ENCODE measurements at regions of chr19 and their contacts with region 1.

Region 1: DNA sequence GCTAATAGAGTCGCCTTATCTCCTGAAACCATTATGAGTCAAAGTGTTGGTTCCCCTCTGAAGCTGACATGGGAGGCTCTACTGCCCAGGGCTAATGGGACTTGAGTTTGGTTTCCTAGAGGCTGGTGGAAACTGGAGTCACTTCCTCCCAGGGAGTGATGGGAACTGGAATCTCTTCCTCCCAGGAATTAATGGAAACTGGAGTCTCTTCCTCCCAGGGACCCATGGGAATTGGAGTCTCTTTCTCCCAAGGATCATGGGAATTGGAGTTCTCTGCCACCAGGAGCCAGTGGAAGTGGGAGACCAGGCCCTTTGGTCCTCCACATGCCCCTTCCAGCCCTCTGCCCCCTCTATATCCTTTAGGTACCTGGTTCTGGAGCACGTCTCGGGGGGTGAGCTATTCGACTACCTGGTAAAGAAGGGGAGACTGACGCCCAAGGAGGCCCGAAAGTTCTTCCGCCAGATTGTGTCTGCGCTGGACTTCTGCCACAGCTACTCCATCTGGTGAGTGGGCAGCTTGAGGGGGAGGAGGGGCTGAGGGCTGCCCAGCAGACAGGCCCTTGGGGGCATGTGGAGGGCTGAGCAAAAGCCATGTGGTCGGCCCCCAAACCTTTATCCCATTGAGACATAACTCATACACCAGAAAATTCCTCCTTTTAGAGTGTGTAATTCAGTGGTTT is 5.5 kb downstream of the BRSK1 start:
- DNase-seq: no peak
- H3K4me3 ChIP-seq: no peak overlapping the region
- CTCF ChIP-seq: no peak

Region 2: GRCh38 chr19:55014717-55015116 is 274.5 kb before region 1 on chr19:
- CTCF ChIA-PET with region 1: no interaction called
- POLR2A ChIA-PET with region 1: no interaction called
- DNase-seq: no peak
- H3K4me3 ChIP-seq: no peak overlapping the region
- CTCF ChIP-seq: no peak

Region 3: DNA sequence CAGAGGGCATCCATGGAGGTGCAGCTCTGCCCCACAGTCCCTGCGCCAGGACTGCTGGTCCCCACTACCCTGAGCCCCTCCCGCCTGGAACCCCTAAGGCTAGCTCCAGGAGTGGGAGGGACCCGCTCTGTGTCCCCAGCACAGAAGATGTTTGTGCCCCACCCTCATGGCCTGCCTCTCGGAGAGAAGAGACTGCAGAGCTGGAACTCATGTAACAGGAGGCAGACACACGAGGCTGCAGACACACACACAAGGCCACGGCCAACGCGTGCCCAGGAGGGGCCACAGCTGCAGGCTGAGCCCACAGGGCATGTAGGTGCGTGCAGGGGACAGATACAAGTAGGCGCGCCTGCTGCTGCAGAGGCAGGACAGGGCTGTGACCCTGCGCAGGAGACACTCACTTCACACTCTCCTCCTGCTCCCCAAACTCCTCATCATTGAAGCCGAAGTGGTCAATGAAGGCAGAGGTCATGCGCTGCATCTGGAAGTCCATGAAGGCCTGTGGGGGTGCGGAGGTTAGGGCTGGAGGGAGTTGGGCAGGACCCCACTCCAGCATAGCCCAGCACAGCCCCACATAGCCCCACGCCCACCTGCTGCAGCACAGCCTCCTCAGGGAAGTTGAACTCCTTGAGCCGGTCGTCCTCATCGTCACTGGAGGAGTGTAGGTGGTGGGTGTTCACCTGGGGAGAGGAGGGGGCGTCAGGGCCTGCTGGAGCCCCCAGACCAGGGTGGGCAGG is 50.1 kb before region 1 on chr19:
- CTCF ChIA-PET with region 1: no interaction called
- POLR2A ChIA-PET with region 1: no interaction called
- DNase-seq: no peak
- H3K4me3 ChIP-seq: no peak overlapping the region
- CTCF ChIP-seq: no peak

Region 4: GRCh38 chr19:55319785-55320184 is 30.5 kb after region 1 on chr19:
- CTCF ChIA-PET with region 1: interaction called, 11 read pairs
- POLR2A ChIA-PET with region 1: no interaction called
- DNase-seq: no peak
- H3K4me3 ChIP-seq: peak overlapping the region; percentile 33
- CTCF ChIP-seq: no peak

Region 5: DNA sequence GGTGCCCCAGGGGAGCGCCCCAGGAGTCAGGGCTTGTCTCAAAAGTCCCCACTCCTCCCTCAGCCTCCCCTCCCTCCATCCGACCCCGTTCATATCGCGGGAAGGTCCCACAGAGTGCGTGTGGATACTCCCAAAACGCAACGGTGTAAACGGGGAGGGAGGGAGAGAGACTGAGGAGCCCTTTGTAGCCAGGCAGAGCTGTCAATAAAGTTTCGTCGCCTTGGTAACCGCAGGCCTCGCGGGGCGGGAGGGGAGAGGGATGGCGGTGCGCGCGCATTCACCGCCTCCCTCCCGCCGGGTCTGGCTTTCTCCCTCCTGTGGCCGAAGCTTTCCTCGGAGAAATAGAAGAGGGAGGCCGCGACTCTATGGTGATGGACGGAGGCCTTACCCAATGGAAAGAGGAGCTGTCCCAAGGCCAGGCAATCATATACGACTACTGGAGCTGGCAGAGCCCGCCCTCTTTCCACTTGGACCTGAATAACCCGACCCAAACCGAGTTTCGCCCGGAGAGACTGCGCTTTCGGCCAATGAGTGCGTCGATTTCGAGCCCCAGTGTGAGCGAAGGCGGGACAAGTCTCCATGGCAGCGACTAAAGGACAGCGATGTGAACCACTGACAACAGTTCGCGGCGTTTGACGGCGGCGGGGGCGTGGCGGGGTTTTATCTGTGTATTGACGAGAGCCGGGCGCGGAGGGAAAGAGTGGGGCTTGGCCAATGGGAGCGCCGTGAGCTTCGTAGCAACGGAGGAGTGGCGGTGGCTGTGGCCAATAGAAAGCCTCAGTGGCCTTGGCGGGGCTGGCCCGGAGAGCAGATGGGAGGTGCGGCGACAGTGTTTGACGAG is 50.0 kb after region 1 on chr19 and contains the start of gene KMT5C:
- CTCF ChIA-PET with region 1: interaction called, 13 read pairs
- POLR2A ChIA-PET with region 1: no interaction called
- DNase-seq: peak; percentile 100
- H3K4me3 ChIP-seq: peak within 1 kb of the TSS; percentile 74
- CTCF ChIP-seq: peak; percentile 47

Region 6: GRCh38 chr19:55369671-55370304 is 80.5 kb after region 1 on chr19:
- CTCF ChIA-PET with region 1: no interaction called
- POLR2A ChIA-PET with region 1: no interaction called
- DNase-seq: no peak
- H3K4me3 ChIP-seq: peak overlapping the region; percentile 74
- CTCF ChIP-seq: no peak

Region 7: GRCh38 chr19:55385740-55386529 is 96.7 kb after region 1 on chr19 and contains the start of gene RPL28:
- CTCF ChIA-PET with region 1: interaction called, 35 read pairs
- POLR2A ChIA-PET with region 1: no interaction called
- DNase-seq: peak; percentile 74
- H3K4me3 ChIP-seq: peak within 1 kb of the TSS; percentile 97
- CTCF ChIP-seq: no peak

Region 8: GRCh38 chr19:55418185-55418584 is 128.9 kb after region 1 on chr19:
- CTCF ChIA-PET with region 1: interaction called, 23 read pairs
- POLR2A ChIA-PET with region 1: no interaction called
- DNase-seq: peak; percentile 63
- H3K4me3 ChIP-seq: no peak overlapping the region
- CTCF ChIP-seq: peak; percentile 68

Region 9: GRCh38 chr19:55452749-55453346 is 163.6 kb after region 1 on chr19:
- CTCF ChIA-PET with region 1: interaction called, 12 read pairs
- POLR2A ChIA-PET with region 1: no interaction called
- DNase-seq: no peak
- H3K4me3 ChIP-seq: no peak overlapping the region
- CTCF ChIP-seq: no peak

Measured in AG04449 (cell line).